Astrocyte of the cerebellum (primary cell): ENCODE measurements at regions of chr16 and their contacts with region 1.

Region 1: DNA sequence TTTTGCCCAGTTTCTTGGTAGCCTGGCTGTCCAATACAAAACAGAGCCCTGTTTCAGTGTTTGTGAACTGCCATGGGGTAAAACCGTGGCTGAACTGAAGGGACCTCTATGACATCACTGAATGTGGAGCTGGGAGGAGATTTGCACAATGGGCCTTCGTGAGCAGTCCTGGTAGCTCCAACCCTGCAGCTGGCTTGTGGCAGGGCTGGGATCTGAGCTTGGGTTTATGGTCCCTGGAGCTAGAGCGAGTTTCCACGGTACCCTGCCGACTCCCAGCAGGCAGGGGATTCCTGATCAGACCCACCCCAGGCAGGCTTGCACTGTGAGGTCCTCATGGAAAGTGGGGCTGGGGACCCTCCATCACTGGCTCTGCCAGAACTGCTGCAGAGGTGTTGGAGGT is 247.0 kb downstream of the GSG1L start:
- DNase-seq: no peak
- H3K4me3 ChIP-seq: no peak overlapping the region
- CTCF ChIP-seq: no peak

Region 2: DNA sequence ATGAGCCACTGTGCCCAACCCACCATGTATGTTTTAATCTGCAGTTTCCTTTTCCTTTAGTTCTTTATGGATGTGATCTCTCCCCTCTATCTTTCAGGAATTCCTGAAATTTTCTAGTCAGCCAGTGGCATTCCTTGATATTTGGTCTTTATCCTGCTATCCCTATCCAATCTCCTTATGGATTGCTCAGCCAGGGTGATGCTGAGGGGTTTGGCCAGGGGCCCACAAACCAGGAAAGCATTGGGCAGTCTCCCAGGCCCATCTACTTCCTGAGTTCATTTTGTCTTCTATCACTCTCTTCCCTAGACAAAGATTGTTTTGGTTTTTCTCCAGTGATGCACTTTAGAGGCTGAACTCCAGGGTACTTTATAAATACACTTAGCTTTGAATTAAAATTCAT is 150.7 kb before region 1 on chr16:
- in situ Hi-C with region 1: loop called (anchors 5 kb)
- DNase-seq: no peak
- H3K4me3 ChIP-seq: no peak overlapping the region
- CTCF ChIP-seq: no peak

Region 3: DNA sequence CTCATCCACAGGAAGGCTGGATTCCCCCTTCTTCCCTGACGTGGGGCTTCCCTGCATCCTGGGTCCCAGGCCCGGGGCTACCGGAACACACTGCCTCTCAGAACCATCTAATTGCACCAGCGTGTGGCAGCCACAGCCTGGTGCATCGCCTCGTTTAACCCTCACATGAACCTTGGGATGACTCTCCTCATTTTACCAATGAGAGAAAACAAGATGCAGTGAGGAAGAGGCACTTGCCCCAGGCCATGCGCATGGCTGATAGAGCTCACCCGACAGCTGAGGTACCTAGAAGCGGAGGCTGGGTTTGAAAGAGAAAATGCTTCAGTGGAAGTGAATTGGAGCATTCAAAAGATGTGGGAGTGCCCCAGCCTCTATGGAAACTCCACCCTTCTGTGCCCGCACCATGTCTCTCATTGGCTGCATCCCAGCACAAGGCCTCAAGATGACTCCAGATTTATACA is 104.3 kb before region 1 on chr16:
- in situ Hi-C with region 1: loop called (anchors 5 kb)
- DNase-seq: no peak
- H3K4me3 ChIP-seq: no peak overlapping the region
- CTCF ChIP-seq: no peak

Region 4: DNA sequence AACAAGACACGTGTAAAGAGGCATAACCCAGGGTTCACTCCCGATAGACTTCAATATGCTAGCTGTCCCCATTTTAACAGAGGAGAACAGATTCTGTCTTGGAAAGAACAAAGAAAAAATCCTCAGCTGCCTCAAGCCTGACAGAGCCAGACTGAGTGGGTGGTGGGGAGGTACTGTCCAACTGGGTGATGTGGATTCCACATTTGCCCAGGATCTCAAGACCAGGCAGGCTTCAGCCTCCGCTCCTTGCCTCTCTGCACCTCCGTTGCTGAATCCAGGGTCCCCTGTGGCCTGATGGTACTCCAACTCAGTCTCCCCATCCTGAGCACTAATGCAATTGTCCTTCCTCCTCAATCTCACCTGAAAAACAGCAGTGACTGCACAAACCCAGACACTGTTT is 83.2 kb after region 1 on chr16:
- in situ Hi-C with region 1: loop called (anchors 5 kb)
- DNase-seq: no peak
- H3K4me3 ChIP-seq: no peak overlapping the region
- CTCF ChIP-seq: no peak

Region 5: DNA sequence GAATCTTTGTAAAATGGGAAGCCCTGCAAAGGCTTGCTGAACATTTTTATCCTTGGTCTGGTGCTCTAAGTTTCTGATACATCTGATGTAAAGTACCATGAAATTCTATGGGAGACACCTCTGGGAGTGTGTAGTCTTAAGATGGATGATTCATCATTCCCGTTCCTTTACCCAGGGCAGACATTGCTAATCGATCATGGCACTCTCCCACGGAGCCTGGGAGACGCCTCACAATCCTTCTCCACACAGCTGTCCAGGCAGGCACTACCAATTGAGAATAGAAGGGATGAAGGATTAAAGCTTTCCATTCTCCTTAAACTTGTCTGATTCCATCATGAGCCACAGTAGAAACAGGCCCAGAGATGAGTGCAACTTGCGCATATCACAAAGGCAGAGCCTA is 102.2 kb after region 1 on chr16:
- in situ Hi-C with region 1: no loop called
- DNase-seq: no peak
- H3K4me3 ChIP-seq: no peak overlapping the region
- CTCF ChIP-seq: no peak

Region 6: DNA sequence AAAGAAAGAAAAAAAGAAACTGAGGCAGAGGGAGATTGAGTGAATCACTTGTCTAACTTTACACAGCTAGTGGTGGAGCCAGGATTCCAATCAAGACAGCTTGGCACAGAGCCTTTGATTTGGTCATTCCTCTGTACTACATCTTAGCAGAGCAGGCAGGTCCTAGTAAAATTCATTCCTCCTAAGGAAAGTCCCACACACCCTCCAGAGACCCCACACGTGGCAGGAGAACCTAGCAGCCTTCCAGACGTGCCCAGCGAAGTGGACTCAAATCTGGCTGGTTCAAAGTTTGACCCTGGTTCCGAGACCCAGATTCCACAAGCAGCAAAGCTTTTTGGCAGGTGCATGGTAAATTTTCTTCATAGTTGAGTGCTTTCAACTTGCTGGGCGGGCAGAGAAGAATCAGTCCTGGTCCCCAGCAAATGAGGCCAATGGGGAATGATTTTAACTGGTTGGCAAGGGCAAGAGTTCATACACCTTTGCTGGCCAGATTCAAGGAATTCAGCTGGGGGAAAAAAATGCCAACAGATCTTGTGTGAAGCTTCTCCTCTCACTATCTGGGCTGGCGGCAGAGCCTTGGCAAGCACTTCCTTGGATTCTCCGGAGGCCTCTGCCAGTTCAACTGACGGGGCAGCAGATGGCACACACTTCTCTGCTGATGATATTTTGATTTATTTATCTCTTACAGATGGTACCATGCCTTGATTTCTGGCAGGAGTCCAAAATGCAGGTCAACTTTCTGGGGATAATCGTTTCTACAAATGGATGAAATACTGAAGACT is 164.5 kb after region 1 on chr16:
- in situ Hi-C with region 1: loop called (anchors 10 kb)
- DNase-seq: no peak
- H3K4me3 ChIP-seq: no peak overlapping the region
- CTCF ChIP-seq: no peak

Region 7: DNA sequence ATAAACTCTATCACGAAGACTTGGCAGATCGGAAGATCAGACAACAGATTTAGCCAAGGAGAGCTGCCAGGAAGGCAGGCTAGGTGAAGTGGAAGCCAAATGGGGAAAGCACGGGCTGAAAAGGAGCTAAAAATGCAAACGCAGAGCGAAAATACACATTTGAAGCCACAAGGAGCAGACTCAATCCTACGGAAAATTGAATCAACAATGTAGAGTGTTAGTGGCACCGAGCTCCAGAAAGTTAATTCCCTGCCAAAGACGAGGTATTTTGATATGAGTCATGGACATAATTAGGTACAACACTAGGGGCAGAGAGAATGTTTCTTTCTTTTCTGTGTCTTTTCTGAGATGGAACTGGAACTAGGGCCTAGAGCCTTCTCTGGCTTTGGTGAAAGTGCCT is 226.2 kb after region 1 on chr16:
- in situ Hi-C with region 1: no loop called
- DNase-seq: peak; percentile 57
- H3K4me3 ChIP-seq: no peak overlapping the region
- CTCF ChIP-seq: peak; percentile 10